Left colon (tissue), 2 donors: ENCODE measurements at regions of chr13 and their contacts with region 1.

Region 1: GRCh38 chr13:75482070-75482819 is at the start of gene TBC1D4:
- DNase-seq: peak; percentile 86 to 89
- ATAC-seq: peak; percentile 80
- total RNA-seq, gene TBC1D4: 19.4 to 19.8 TPM

Region 2: DNA sequence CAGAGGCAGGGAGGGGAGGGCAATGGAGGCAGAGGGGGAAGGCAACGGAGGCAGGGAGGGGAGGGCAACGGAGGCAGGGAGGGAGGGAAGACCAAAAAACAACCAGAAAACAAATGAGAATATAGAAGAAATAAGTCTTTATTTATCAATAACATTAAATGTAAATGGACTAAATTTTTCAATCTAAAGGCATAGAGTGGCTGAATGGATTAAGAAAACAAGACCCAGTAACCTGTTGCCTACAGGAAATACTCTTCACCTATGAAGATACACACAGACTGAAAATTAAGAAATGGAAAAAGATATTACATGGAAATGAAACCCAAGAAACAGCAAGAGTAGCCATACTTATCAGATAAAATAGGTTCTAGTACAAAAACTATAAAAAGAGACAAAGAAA is 536.6 kb before region 1 on chr13:
- intact Hi-C with region 1: no loop called
- DNase-seq: no peak
- ATAC-seq: no peak

Region 3: DNA sequence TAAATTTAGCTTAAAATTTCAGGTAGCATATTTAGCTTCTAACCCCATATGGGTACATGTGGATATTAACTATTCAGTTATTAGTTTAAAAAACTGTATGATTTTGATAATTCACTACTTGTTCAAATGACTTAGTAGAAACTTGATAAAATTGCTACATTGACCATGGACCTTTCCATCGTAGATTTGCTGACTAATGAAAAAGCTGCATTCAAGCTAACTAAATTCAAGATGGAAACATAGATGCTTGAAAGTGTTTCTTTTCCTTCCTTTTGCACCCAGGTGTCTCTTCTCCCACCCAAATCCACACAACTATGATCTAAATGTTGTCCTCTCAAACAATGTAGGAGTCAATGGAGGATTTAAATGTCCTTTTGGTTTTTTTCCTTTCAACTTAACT is 439.4 kb before region 1 on chr13:
- intact Hi-C with region 1: no loop called
- DNase-seq: no peak
- ATAC-seq: no peak

Region 4: DNA sequence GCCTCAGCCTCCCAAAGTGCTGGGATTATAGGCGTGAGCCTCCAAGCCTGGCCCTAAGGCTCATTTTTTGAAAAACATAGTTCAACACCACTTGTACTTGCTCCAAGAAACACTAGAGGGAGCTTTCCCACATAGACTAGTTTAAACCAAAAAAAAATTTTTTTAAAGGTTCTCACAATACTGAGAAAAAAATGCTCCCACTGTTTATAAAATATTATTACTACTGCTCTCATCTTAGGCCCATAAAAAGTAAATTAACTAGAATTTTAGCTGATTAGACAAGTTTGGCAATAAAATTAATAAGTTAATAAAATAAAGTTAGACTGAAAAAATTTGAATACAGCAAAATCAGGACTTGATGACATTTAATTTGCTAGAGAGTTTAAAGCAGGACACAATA is 109.7 kb before region 1 on chr13:
- intact Hi-C with region 1: loop called in 1 of 2 experiments (anchors 5 kb)
- DNase-seq: no peak
- ATAC-seq: peak; percentile 67

Region 5: DNA sequence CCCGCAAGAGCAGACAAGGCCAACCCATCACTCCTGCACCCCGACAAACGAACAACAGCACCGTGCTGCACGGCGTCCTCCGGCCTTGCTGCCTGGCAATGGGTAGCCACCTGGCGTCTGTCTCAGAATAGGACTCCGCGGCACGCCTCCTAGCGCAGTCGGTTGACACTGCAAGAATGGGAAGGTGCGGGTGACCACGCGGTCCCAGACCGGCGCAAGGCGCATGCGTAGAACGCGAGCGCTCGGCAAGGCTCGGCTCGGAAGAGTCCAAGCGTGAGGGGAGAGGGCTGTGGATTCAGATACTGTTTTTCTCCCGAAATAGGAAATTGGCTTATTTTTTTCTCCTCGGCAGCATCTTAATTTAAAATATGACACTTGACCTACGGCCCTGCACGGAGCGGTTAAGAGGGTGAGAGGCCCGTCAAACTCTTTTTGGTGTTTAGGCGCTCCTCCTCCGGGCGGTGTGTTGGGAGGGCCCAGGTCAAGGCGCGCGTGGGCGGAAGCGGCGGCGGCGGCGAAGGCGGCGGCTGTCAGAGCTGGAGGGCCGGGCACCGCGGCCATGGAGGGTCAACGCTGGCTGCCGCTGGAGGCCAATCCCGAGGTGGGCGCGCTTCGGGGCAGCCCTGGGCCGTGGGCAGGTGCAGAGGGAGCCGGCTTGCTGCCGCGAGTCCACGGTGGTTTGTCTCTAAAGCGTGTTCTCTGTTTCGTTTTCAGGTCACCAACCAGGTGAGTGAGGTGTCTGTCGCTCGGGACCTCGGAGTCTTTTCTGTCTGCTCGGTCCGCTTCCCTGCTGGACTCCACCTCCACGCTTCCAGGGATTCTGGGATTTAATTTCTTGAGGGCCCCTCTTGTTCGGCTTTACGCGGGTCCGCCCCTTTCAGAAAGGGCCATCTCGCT is 67.3 kb after region 1 on chr13 and contains the start of gene UCHL3:
- intact Hi-C with region 1: loop called in 1 of 2 experiments (anchors 10 kb)
- DNase-seq: peak; percentile 95 to 99
- ATAC-seq: peak; percentile 92
- total RNA-seq, gene UCHL3: 40.8 to 43.6 TPM

Region 6: DNA sequence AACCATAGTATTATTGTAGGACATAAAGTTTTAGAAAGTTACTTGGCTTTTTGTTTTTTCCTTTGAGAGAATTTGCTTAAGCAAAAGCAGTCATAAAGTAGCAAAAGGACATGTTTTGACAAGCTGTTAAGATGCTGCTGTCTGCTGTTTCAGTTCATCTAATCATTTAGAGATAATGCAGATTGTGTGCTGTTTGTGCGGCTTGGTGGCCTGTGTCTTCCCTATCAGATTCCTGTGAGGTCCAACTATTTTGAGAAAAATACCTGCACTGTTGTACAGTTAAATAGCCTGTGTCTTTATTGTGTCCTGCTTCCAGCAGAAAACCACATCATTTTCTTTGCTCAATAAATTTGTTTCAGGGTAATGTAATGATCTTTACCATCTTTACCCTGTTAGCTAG is 87.3 kb after region 1 on chr13:
- intact Hi-C with region 1: no loop called
- DNase-seq: no peak
- ATAC-seq: no peak

Region 7: DNA sequence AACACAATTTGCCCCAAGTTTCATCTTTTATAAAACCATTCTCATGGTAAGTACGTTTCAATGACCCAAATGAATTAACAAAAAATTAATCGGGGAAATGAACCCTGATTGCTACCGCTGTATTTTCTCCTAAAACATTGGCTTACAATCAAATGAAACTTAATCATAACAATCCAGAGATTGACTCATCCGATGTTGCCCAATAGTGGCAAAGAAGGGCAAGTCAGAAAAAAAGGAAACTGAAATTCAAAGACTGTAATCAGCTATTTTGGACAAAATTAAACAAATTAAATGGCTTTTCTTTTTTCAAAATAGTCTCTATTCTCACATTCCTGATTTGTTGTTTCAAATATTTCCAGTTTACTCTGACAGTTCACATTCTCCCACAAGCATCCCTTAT is 1462.2 kb after region 1 on chr13:
- intact Hi-C with region 1: no loop called
- DNase-seq: no peak
- ATAC-seq: no peak